PC-9 (cell line): ENCODE measurements at regions of chr10 and their contacts with region 1.

Region 1: DNA sequence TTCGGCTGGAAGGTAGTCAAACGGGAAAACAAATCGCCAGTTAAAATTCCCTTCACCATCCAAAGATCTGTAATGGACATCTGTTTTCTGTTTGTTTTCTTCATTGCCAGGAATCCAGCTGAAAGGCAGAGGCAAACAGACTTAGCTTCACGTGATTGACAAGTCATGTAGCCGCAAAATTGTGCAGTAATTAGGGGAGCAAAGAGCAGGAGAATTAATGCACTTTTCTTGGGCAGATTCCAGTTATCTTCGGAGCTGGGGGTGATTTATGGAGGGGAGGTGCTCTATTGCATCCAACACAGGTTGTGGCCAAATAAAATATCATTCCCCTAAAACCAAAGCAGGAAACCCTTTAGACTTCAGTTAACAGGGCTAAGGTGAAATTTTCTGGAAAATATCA is 162.2 kb downstream of the MYOF start:
- DNase-seq: no peak
- H3K4me3 ChIP-seq: no peak overlapping the region
- H3K27ac ChIP-seq: no peak overlapping the region
- H3K4me1 ChIP-seq: no peaks in the 10 kb centered on the region
- H3K27me3 ChIP-seq: no peaks in the 10 kb centered on the region
- CTCF ChIP-seq: no peak

Region 2: DNA sequence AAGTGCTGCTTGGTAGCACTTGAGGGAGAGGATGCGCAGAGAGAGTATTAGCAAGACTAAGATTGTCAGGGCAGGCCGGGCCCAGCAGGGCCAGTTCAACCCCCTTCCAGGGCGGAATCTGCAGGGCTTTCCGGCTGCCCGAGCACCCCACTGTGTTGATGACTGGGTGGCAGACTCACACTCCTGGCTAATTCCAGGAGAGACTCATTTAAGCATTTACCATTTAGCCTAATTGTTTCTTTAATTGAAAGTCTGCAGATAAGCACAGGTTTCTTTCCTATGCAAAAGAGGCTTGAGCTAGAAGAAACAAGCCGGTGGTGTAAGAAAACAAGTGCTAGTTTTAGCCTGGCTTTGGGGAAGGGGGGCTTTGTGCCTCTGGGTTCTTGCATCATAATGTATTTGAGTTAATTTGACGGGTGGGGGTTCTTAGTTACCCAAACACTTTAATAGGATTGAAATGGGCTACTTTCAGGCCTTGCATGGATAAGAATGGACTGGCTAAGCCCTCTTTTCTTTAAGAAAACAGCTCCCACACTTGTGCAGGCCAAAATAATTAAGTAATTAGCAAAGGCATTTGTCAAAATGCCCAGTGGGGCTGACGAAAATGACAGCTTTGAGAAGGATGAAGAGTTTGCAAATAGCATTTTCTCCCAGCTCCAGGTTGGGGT is 39.1 kb before region 1 on chr10:
- CTCF ChIA-PET with region 1: no interaction called
- POLR2A ChIA-PET with region 1: interaction called, 13 read pairs
- intact Hi-C with region 1: no loop called
- DNase-seq: no peak
- H3K4me3 ChIP-seq: no peak overlapping the region
- H3K27ac ChIP-seq: no peak overlapping the region
- H3K4me1 ChIP-seq: no peaks in the 10 kb centered on the region
- H3K27me3 ChIP-seq: no peaks in the 10 kb centered on the region
- CTCF ChIP-seq: no peak